Activated CD4-positive, alpha-beta T cell treated with anti-CD3 and anti-CD28 coated beads, Interleukin-2, amount 10 ng/mL, durations not matched to agents 7 days and 5 days (primary cell): ENCODE measurements at regions of chr2 and their contacts with region 1.

Region 1: DNA sequence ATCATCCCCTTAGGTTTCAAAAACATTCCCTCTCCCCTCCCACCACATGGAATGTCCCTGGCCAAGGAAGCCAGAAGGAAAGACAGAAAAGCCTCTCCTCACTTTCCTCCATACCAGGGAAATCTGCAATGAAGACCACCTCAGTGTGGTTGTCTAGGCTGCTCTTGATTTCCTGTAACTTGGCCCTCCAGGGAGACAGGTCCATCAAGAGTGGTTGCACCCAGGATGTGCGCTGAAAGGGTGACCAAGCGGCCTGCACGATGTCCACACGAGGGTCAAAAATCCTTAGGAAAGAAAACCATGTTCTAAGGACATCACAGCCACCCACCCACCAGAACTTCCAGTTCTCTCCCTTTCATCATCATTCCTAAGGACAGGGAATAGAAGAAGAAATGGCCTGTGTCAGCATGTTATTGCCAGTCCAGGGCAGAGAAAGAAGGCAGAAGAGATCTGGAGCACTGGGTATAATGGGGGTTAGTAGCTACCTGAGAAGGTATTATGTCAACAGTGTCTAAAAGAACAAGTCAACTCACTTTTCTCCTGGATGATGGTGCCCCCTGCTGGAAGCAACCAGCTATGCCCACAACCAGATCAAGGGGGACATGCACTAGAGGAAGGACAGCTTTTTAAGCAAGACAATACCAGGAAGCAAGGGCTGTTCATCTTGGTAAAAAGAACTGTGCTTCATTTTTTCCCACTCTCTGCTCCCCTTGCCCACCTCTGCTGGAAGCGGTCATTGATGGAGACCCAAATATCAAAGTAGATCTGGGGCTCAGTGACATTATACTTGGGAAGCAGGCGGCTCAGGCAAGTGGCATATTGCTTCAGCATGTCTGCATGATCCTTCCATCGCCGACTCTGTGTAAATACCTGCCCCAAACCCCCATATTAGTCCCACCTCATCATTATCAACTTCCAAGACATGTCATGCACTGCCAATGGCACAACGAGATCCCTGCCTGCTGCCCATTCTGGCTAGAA is 9.3 kb downstream of the GGCX start:
- DNase-seq: peak; percentile 94
- H3K4me3 Mint-ChIP-seq: no peak overlapping the region
- H3K27ac Mint-ChIP-seq: peak overlapping the region; percentile 31
- H3K4me1 Mint-ChIP-seq: peaks cover 5% of the 10 kb centered on the region
- H3K27me3 Mint-ChIP-seq: no peaks in the 10 kb centered on the region

Region 2: DNA sequence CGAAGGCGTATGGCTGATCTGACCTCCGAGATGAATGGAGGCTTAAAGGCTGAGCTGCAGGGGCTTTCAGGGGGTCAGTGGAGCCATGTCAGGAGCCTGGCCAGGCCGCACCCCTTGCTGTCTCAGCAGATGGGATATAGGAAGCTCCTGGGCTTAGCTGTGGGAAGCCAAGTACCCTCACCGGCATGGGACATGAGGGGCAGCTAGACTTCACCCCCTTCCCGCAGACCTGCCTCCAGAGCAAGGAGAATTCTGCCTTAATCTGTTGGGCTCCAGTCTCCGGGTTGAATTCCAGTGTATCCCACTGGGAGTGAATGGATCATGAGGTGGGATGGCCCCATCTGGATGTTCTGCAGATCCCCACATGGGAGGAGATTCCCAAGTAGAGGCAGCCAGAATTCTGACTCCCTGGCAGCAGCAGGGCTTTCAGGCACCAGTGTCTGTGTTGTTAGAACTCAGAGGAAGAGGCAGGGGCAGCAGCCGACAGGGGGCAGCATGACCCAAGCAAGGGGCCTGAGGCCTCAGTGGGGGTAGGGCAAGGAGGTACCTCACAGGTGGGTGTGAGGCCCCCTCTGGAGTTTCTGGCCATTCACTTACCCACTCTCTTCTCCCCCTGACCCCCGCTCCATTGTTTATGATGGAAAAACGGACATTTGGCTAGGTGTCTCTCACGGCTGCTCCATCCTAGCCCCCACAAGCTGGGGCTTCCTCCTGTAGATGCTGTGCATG is 160.9 kb before region 1 on chr2:
- CTCF ChIA-PET with region 1: interaction called, 21 read pairs
- POLR2A ChIA-PET with region 1: no interaction called
- DNase-seq: peak; percentile 83
- H3K4me3 Mint-ChIP-seq: no peak overlapping the region
- H3K27ac Mint-ChIP-seq: peak overlapping the region; percentile 74
- H3K4me1 Mint-ChIP-seq: peaks cover 25% of the 10 kb centered on the region
- H3K27me3 Mint-ChIP-seq: no peaks in the 10 kb centered on the region

Region 3: GRCh38 chr2:85420536-85421259 is 131.3 kb before region 1 on chr2:
- CTCF ChIA-PET with region 1: interaction called, 65 read pairs
- POLR2A ChIA-PET with region 1: interaction called, 5 read pairs
- DNase-seq: peak; percentile 90
- H3K4me3 Mint-ChIP-seq: peak overlapping the region; percentile 38
- H3K27ac Mint-ChIP-seq: peak overlapping the region; percentile 100
- H3K4me1 Mint-ChIP-seq: peaks cover 35% of the 10 kb centered on the region
- H3K27me3 Mint-ChIP-seq: no peaks in the 10 kb centered on the region

Region 4: DNA sequence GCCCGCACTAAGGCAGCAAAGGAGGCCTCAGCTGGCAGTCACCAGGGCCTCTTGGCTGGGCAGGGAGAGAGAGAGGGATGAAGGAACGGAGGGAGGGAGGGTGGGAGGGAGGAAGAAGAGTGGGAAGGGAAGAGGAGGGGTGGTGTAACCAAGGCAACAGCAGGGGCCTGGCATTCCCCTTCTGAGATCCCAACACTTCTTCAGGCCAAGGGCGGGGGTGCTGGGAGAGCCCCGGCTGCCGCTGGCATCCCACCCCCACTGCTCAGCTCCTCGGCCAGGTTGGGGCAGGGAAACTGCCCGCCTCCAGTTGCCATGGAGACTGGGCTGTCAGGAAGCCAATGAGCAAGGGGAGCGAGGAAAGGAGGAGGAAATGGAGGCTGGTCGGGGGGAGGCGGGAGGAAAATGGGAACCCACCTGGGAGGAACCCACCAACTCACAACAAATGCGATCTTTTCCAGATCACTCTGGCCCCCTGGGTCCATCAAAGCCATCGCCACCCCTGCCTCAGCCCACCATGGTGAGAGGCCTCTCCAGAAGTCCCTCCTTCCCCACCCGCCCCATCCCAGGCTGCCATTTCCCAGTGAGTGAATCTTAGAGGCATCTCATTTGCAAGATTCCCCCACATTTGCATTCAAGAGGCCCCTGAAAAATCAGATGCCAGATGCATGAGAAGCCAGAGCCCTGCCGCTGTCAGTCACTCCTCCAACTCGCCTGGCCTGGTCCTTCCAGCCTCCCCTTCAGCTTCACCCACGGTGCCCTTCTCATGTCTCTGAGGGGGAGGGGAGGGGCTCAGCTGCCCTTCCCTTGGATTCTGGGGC is 121.0 kb before region 1 on chr2:
- CTCF ChIA-PET with region 1: interaction called, 18 read pairs
- POLR2A ChIA-PET with region 1: no interaction called
- DNase-seq: no peak
- H3K4me3 Mint-ChIP-seq: no peak overlapping the region
- H3K27ac Mint-ChIP-seq: no peak overlapping the region
- H3K4me1 Mint-ChIP-seq: peaks cover 7% of the 10 kb centered on the region
- H3K27me3 Mint-ChIP-seq: no peaks in the 10 kb centered on the region

Region 5: DNA sequence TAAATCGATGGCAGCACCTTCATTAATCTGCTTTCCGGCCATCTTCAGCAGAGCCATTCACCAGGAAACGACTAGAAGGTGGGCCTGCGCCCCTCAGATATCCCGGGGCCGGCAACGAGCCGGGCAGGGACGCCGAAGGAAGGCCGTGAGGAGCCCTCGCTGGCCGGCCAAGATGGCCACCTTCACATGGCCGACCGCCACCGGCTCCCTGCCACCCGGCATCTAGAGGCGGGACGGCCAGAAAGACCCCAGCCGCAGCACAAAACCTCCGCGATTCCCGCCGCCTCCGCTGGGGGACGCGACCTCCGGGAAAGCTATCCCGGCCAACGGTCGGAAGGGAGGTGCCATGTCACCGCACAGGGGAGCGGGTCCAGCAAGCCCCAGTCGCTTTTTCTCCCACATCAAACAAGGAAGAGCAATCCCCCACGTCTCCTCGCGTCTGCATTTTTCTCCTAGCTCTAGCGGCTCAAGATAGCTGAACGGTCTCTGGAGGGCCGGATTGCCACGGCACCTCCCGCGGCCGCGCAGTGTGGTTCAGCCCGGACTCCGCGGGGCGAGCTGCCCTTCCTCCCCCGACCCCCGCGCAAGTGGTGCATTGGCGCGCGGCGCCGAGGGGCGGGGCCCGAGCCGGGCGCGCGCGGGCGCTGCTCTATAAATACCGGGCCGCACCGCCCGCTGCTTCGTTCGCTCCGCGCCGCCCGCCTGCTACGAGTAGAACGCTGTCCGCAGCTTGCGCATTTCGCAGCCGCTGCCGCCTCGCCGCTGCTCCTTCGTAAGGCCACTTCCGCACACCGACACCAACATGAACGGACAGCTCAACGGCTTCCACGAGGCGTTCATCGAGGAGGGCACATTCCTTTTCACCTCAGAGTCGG is 13.3 kb before region 1 on chr2 and contains the start of gene MAT2A:
- CTCF ChIA-PET with region 1: interaction called, 40 read pairs
- POLR2A ChIA-PET with region 1: interaction called, 5 read pairs
- DNase-seq: peak; percentile 84
- H3K4me3 Mint-ChIP-seq: peak within 1 kb of the TSS; percentile 97
- H3K27ac Mint-ChIP-seq: peak within 1 kb of the TSS; percentile 96
- H3K4me1 Mint-ChIP-seq: peaks cover 50% of the 10 kb centered on the region
- H3K27me3 Mint-ChIP-seq: no peaks in the 10 kb centered on the region
- total RNA-seq, gene MAT2A: 263 to 269 TPM